ENCODE measurements at regions of chr14 and their contacts with region 1.

Region 1: DNA sequence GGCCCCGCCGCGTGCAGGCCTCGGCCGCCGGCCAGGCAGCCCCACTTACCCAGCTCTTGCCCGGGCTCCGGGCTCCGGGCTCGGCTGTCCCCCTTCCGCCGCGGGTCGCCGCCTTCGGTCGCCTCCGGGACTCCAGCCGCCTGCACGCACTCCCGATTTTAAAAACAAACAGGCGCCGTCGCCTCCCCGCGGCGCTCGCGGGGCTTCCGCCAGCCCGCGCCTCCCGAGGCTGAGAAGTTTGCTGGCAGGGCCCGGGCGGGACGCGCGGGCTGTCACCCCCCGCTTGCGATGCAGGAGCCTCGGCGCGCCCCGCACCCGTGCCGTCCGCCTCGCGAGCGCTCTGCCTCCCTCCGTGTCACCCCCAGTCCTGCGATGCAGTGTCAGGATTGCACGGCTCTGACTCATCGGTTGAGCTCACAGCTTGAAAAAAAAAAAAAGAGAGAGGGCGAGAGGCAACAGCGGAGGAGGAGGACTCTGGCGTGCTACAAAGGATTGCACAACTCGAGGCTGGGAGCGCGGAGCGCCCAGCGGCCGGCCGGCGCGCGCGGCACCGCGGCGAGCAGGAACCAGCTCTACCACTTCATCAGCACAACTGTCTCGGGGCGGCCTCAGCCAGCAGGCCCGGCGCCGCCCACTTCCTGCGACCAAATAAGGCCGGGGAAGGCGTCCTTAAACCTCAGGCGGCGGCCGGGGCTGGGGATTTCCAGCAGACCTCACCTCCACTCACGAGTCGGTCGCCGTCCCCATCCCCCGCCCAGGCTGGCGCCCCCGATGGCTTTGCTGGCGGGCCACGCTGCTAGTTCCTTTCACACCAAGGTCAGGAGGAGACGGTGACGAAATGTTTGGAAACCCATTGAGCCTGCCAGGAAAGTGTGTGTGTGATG is 45.8 kb upstream of the PNMA1 start:
- DNase-seq: peak; percentile 98
- ATAC-seq: peak; percentile 67
- H3K4me3 ChIP-seq: peak overlapping the region; percentile 32 to 90 (median 87)
- H3K4me3 Mint-ChIP-seq: peak overlapping the region; percentile 92
- H3K27ac ChIP-seq: peak overlapping the region; percentile 98
- H3K27ac Mint-ChIP-seq: peak overlapping the region; percentile 97
- H3K4me1 ChIP-seq: peaks cover 79 to 85% of the 10 kb centered on the region in 2 donors
- H3K4me1 Mint-ChIP-seq: peaks cover 84% of the 10 kb centered on the region
- H3K27me3 ChIP-seq: no peaks in the 10 kb centered on the region
- H3K27me3 Mint-ChIP-seq: no peaks in the 10 kb centered on the region
- CTCF ChIP-seq: peak; percentile 21

Region 2: GRCh38 chr14:73741386-73741875 is 18.5 kb before region 1 on chr14:
- CTCF ChIA-PET with region 1: interaction called, 107 read pairs
- POLR2A ChIA-PET with region 1: interaction called, 10 read pairs
- intact Hi-C with region 1: no loop called
- DNase-seq: peak; percentile 73
- ATAC-seq: peak; percentile 77
- H3K4me3 ChIP-seq: peak overlapping the region; percentile 10 to 55 (median 43)
- H3K4me3 Mint-ChIP-seq: peak overlapping the region; percentile 94
- H3K27ac ChIP-seq: peak overlapping the region; percentile 61 to 81
- H3K27ac Mint-ChIP-seq: peak overlapping the region; percentile 99
- H3K4me1 ChIP-seq: peaks cover 63 to 71% of the 10 kb centered on the region in 2 donors
- H3K4me1 Mint-ChIP-seq: peaks cover 74% of the 10 kb centered on the region
- H3K27me3 ChIP-seq: no peaks in the 10 kb centered on the region
- H3K27me3 Mint-ChIP-seq: no peaks in the 10 kb centered on the region
- CTCF ChIP-seq: no peak

Region 3: DNA sequence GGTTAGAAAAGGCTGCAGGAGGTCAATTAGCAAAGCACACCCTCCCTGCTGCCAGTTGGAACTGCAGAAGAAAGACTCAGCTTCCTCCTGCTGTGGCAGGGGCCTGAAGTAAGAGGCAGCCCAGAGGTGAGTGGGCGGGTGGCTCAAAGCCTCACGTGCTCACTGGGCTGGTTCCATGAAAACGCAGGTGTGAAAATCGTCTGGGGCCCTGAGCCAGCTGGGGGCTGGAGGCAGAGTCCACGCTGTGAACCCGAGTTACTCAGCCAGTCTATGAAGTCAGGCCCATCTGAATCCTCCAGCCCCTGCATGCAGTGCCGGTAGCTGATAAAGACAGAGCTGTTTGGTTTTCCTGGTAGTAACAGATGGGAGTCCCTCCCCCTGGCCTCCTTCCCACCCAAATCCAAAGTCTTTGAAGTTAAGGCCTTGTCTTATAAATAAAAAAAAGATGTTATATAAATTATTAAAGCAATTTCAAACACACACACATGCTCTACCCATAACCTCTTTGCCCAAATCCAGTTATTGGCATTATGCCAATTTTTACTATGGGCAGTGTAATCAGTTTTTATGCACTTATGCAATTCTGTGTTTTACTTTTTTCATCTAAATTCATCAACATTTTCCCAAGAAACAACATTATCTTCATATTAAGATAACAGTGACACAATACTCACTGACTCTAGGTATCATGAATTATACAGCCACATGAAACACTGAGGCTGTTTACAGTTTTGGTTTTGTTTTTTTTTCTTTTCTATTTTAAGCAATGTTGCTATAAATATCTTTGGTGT is 12.1 kb after region 1 on chr14:
- CTCF ChIA-PET with region 1: interaction called, 220 read pairs
- POLR2A ChIA-PET with region 1: interaction called, 183 read pairs
- intact Hi-C with region 1: loop called (anchors 1 kb)
- DNase-seq: peak; percentile 89
- ATAC-seq: peak; percentile 61
- H3K4me3 ChIP-seq: peak overlapping the region in 3 of 5 experiments; percentile 5 to 52 (median 10)
- H3K4me3 Mint-ChIP-seq: peak overlapping the region; percentile 87
- H3K27ac ChIP-seq: peak overlapping the region; percentile 96 to 97
- H3K27ac Mint-ChIP-seq: peak overlapping the region; percentile 99
- H3K4me1 ChIP-seq: peaks cover 83 to 96% of the 10 kb centered on the region in 2 donors
- H3K4me1 Mint-ChIP-seq: peaks cover 76% of the 10 kb centered on the region
- H3K27me3 ChIP-seq: no peaks in the 10 kb centered on the region
- H3K27me3 Mint-ChIP-seq: no peaks in the 10 kb centered on the region
- CTCF ChIP-seq: no peak

Region 4: GRCh38 chr14:73777401-73777800 is 17.4 kb after region 1 on chr14:
- CTCF ChIA-PET with region 1: interaction called, 220 read pairs
- POLR2A ChIA-PET with region 1: interaction called, 183 read pairs
- intact Hi-C with region 1: no loop called
- DNase-seq: peak; percentile 67
- ATAC-seq: peak; percentile 84
- H3K4me3 ChIP-seq: no peak overlapping the region
- H3K4me3 Mint-ChIP-seq: peak overlapping the region; percentile 18
- H3K27ac ChIP-seq: peak overlapping the region in 1 of 2 donors; percentile 35
- H3K27ac Mint-ChIP-seq: peak overlapping the region; percentile 80
- H3K4me1 ChIP-seq: peaks cover 60 to 67% of the 10 kb centered on the region in 2 donors
- H3K4me1 Mint-ChIP-seq: peaks cover 65% of the 10 kb centered on the region
- H3K27me3 ChIP-seq: no peaks in the 10 kb centered on the region
- H3K27me3 Mint-ChIP-seq: no peaks in the 10 kb centered on the region
- CTCF ChIP-seq: peak; percentile 47

Region 5: GRCh38 chr14:73825551-73826188 is 65.7 kb after region 1 on chr14:
- CTCF ChIA-PET with region 1: interaction called, 51 read pairs
- POLR2A ChIA-PET with region 1: no interaction called
- intact Hi-C with region 1: no loop called
- DNase-seq: peak; percentile 81
- ATAC-seq: peak; percentile 99
- H3K4me3 ChIP-seq: no peak overlapping the region
- H3K4me3 Mint-ChIP-seq: no peak overlapping the region
- H3K27ac ChIP-seq: no peak overlapping the region
- H3K27ac Mint-ChIP-seq: no peak overlapping the region
- H3K4me1 ChIP-seq: no peaks in the 10 kb centered on the region
- H3K4me1 Mint-ChIP-seq: peaks cover 4% of the 10 kb centered on the region
- H3K27me3 ChIP-seq: no peaks in the 10 kb centered on the region
- H3K27me3 Mint-ChIP-seq: no peaks in the 10 kb centered on the region
- CTCF ChIP-seq: peak; percentile 93

Region 6: GRCh38 chr14:74084277-74085046 is 324.5 kb after region 1 on chr14 and contains the starts of genes ALDH6A1 and LIN52:
- CTCF ChIA-PET with region 1: no interaction called
- POLR2A ChIA-PET with region 1: no interaction called
- intact Hi-C with region 1: no loop called
- DNase-seq: peak; percentile 100
- ATAC-seq: peak; percentile 85
- H3K4me3 ChIP-seq: peak within 1 kb of the TSS; percentile 75 to 79 (median 77)
- H3K4me3 Mint-ChIP-seq: peak within 1 kb of the TSS; percentile 95
- H3K27ac ChIP-seq: peak within 1 kb of the TSS; percentile 34 to 79
- H3K27ac Mint-ChIP-seq: peak within 1 kb of the TSS; percentile 88
- H3K4me1 ChIP-seq: peaks cover 23 to 24% of the 10 kb centered on the region in 2 donors
- H3K4me1 Mint-ChIP-seq: peaks cover 35% of the 10 kb centered on the region
- H3K27me3 ChIP-seq: no peaks in the 10 kb centered on the region
- H3K27me3 Mint-ChIP-seq: no peaks in the 10 kb centered on the region
- CTCF ChIP-seq: no peak
- total RNA-seq, gene ALDH6A1: 14.9 and 16.7 TPM in 2 replicates
- total RNA-seq, gene LIN52: 13.1 and 15.5 TPM in 2 replicates